ENCODE measurements at regions of chr3 and their contacts with region 1.

Region 1: DNA sequence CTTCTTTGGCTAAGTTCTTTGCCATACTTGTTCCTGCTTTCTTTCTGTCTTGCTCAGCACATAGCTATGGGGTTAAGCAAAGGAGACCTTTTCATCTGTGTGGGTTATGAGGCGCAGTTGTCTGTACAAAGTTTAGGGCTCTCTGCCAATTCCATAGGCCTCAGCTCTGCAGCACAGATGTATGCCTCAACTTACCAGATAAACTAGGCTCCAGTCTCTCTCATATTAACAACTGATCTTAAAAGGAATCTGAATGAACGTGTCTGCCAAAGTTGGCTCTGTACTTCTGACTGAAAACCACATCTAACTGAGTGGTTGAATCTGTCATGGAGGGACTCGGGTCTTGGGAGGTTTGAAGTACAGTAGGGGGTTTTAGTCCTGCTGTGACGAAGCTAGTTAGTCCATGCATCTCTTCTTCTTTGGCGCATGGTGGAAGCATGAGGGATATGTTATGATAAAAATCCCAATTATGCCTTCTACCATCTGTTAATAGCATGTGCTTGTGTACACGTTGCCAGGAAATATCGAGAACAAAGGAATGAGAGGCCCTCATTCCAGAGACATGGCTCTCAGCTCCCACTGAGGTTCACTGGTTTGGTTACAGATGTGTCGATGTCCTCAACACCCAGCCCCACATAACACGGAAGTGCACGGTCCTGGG is 114.6 kb upstream of the TSC22D2 start:
- DNase-seq: no peak
- ATAC-seq: no peak
- H3K4me3 Mint-ChIP-seq: no peak overlapping the region
- H3K27ac Mint-ChIP-seq: no peak overlapping the region
- H3K4me1 Mint-ChIP-seq: no peaks in the 10 kb centered on the region
- H3K27me3 Mint-ChIP-seq: peaks cover 7% of the 10 kb centered on the region

Region 2: GRCh38 chr3:150329408-150329807 is 35.9 kb after region 1 on chr3:
- CTCF ChIA-PET with region 1: no interaction called
- POLR2A ChIA-PET with region 1: no interaction called
- intact Hi-C with region 1: loop called in 1 of 2 experiments (anchors 2 kb)
- DNase-seq: peak; percentile 11
- ATAC-seq: peak; percentile 64
- H3K4me3 Mint-ChIP-seq: no peak overlapping the region
- H3K27ac Mint-ChIP-seq: no peak overlapping the region
- H3K4me1 Mint-ChIP-seq: peaks cover 5% of the 10 kb centered on the region
- H3K27me3 Mint-ChIP-seq: peaks cover 12% of the 10 kb centered on the region

Region 3: GRCh38 chr3:150925751-150926201 is 632.2 kb after region 1 on chr3:
- CTCF ChIA-PET with region 1: no interaction called
- POLR2A ChIA-PET with region 1: no interaction called
- intact Hi-C with region 1: no loop called
- DNase-seq: peak; percentile 80
- ATAC-seq: peak; percentile 93
- H3K4me3 Mint-ChIP-seq: peak overlapping the region; percentile 19
- H3K27ac Mint-ChIP-seq: no peak overlapping the region
- H3K4me1 Mint-ChIP-seq: no peaks in the 10 kb centered on the region
- H3K27me3 Mint-ChIP-seq: peaks cover 7% of the 10 kb centered on the region

Measured in activated CD4-positive, alpha-beta T cell treated with anti-CD3 and anti-CD28 coated beads for 36 hours (primary cell).